ENCODE measurements at regions of chr19 and their contacts with region 1.

Region 1: DNA sequence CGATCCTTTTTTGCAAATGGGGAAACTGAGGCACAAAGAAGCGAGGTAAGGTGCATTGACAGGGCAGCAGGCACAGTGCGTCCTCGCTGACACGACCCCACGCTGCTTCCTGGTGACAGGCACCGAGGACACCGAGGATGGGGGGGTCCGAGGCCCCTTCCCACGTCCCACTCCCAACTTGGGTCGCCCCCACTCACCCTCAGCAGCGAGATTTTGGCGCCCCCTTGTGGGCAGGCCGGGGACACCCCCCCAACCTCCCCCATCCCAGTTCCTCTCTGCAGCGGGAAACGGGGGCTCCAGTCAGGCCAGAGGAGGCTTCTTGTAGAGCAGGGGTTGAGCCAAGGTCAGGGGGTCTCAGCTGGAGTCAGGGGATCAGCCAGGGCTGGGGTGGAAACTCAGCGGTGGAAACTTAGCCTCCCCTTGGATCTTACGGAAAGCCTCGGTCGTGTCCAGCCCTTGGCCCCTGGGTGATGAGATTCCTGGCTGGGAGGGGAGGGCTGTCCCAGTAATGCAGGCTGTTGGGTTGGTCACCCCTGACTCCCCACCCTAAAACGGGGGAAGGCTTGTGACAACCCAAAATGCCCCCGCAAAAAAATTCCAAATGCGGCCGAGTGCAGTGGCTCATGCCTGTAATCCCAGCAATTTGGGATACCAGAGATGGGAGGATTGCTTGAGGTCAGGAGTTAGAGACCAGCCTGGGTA is 8.2 kb downstream of the SMIM24 start:
- DNase-seq: peak; percentile 57
- H3K4me3 Mint-ChIP-seq: no peak overlapping the region
- H3K27ac Mint-ChIP-seq: no peak overlapping the region
- H3K4me1 Mint-ChIP-seq: no peaks in the 10 kb centered on the region
- H3K27me3 Mint-ChIP-seq: no peaks in the 10 kb centered on the region

Region 2: DNA sequence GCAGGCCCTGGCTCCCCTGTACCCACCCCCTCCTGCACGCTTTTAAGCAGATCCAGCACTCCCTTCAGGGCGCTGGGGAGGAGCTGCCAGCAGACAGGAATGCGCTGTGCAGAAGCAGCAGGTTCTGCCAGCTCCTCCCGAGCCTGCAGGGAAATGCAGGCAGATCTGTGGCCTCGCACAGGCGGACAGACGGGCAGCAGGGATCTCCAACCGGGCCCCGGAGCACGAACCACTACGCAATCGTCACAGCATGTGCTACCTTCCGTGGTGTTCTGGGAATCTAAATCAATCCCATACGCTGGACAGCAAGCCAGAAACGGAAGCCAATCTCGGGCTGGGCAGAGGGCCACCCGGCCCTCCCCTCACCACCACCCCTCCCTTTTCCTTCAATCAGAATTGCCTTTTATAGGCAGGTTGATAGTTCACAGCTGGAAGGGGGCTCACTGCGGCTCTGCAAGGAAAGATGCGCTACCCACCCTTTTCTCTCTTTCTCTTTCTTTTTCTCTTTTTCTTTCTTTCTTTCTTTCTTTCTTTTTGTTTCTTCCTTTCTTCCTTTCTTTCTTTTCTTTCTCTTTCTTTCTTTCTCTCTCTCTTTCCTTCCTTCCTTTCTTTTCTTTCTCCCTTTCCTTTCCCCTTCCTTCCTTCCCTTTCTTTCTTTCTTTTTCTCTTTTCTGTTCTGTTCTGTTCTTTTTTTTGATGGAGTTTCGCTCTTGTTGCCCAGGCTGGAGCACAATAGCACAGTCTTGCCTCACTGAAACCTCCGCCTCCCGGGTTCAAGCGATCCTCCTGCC is 869.5 kb before region 1 on chr19:
- CTCF ChIA-PET with region 1: no interaction called
- POLR2A ChIA-PET with region 1: no interaction called
- intact Hi-C with region 1: no loop called
- DNase-seq: no peak
- H3K4me3 Mint-ChIP-seq: no peak overlapping the region
- H3K27ac Mint-ChIP-seq: no peak overlapping the region
- H3K4me1 Mint-ChIP-seq: peaks cover 15% of the 10 kb centered on the region
- H3K27me3 Mint-ChIP-seq: peaks cover 3% of the 10 kb centered on the region

Region 3: DNA sequence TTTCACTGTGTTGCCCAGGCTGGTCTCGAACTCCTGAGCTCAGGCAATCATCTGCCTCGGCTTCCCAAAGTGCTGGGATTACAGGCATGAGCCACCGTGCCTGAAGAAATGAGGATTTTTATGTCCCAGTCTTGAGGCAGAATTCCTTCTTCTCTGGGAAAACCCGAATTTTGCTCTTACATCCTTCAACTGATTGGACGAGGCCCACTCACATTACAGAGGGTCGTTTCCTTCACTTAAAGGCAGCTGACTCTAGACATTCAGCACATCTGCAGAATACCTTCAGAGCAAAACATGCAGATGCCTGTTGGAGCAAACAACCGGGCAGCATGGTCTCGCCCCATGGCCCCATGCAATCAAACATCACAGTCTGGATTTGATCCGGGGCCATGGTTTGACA is 142.1 kb before region 1 on chr19:
- CTCF ChIA-PET with region 1: interaction called, 13 read pairs
- POLR2A ChIA-PET with region 1: no interaction called
- intact Hi-C with region 1: loop called (anchors 1 kb)
- DNase-seq: no peak
- H3K4me3 Mint-ChIP-seq: no peak overlapping the region
- H3K27ac Mint-ChIP-seq: no peak overlapping the region
- H3K4me1 Mint-ChIP-seq: peaks cover 2% of the 10 kb centered on the region
- H3K27me3 Mint-ChIP-seq: peaks cover 3% of the 10 kb centered on the region

Region 4: DNA sequence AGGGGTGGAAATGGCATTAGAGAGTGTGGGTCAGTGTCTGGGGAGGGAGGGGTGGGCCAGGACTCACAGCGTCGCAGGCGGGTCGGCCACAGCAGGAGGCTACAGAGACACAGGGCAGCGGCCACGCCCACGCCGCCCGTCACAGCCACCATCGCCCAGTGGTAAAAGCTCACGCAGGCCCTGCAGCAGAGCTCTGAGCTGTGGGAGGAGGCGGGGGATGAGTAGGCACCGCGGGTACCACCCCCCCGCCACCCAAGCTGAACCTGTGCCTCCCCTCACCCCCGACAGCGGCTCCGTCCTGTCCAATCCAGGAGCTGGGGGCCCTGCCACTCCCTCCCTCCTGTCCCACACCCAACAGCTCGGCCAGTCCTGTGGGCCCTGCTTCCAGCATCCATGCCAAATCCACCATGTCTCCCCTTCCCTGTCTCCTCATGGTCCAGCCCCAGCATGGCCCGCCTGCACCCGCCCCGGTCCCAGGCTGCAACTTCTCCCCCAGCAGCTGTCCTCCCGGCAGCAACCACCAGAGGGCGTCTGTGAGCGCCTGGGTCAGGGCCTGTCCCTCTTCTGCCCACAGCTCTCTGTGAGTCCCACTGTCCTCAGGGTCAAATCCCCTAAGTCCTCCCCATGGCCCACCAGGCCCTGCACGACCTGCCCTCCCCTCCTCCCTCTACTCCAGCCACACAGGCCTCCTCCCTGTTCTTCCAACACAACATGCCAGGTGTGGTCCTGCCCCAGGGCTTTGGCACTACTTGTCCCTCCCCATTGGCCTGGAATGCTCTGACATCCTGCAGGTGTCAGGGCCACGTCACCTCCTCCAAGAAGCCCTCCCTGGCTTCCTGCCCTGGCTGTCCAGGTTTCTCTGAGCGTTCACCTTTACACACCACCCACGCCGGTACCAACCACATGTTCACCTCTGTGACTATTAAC is 72.9 kb after region 1 on chr19:
- CTCF ChIA-PET with region 1: no interaction called
- POLR2A ChIA-PET with region 1: no interaction called
- intact Hi-C with region 1: no loop called
- DNase-seq: peak; percentile 87
- H3K4me3 Mint-ChIP-seq: no peak overlapping the region
- H3K27ac Mint-ChIP-seq: peak overlapping the region; percentile 56
- H3K4me1 Mint-ChIP-seq: peaks cover 6% of the 10 kb centered on the region
- H3K27me3 Mint-ChIP-seq: no peaks in the 10 kb centered on the region

Region 5: GRCh38 chr19:3618144-3618810 is 146.2 kb after region 1 on chr19:
- CTCF ChIA-PET with region 1: no interaction called
- POLR2A ChIA-PET with region 1: no interaction called
- intact Hi-C with region 1: no loop called
- DNase-seq: peak; percentile 68
- H3K4me3 Mint-ChIP-seq: no peak overlapping the region
- H3K27ac Mint-ChIP-seq: no peak overlapping the region
- H3K4me1 Mint-ChIP-seq: no peaks in the 10 kb centered on the region
- H3K27me3 Mint-ChIP-seq: no peaks in the 10 kb centered on the region

Measured in activated CD4-positive, alpha-beta memory T cell treated with anti-CD3 and anti-CD28 coated beads for 36 hours (primary cell).